ENCODE measurements at regions of chr11 and their contacts with region 1.

Region 1: GRCh38 chr11:10808553-10809372 is at the start of gene EIF4G2:
- DNase-seq: peak; percentile 99 to 100
- H3K4me3 ChIP-seq: peak within 1 kb of the TSS; percentile 63 to 99 (median 92)
- H3K27ac ChIP-seq: peak within 1 kb of the TSS; percentile 94 to 100 (median 98)
- H3K4me1 ChIP-seq: peaks cover 20 to 46% (median 36%) of the 10 kb centered on the region in 4 donors
- H3K27me3 ChIP-seq: no peaks in the 10 kb centered on the region
- CTCF ChIP-seq: peak in 1 of 7 experiments; percentile 17
- EP300 ChIP-seq: no peak
- POLR2A ChIP-seq: peak in 2 of 4 donors; percentile 98 to 99
- total RNA-seq, gene EIF4G2: 344 to 576 (median 400) TPM

Region 2: GRCh38 chr11:10857709-10858438 is 49.1 kb after region 1 on chr11 and contains the start of gene ZBED5:
- intact Hi-C with region 1: loop called (anchors 10 kb)
- DNase-seq: peak; percentile 99
- H3K4me3 ChIP-seq: peak within 1 kb of the TSS; percentile 81 to 90 (median 84)
- H3K27ac ChIP-seq: peak within 1 kb of the TSS; percentile 98 to 99 (median 99)
- H3K4me1 ChIP-seq: peaks cover 14 to 49% (median 34%) of the 10 kb centered on the region in 4 donors
- H3K27me3 ChIP-seq: no peaks in the 10 kb centered on the region
- CTCF ChIP-seq: peak in 2 of 7 experiments; percentile 9 to 11
- EP300 ChIP-seq: peak; percentile 11
- POLR2A ChIP-seq: peak in 2 of 4 donors; percentile 82 to 84
- total RNA-seq, gene ZBED5: 9.0 to 54.7 (median 25.9) TPM

Region 3: DNA sequence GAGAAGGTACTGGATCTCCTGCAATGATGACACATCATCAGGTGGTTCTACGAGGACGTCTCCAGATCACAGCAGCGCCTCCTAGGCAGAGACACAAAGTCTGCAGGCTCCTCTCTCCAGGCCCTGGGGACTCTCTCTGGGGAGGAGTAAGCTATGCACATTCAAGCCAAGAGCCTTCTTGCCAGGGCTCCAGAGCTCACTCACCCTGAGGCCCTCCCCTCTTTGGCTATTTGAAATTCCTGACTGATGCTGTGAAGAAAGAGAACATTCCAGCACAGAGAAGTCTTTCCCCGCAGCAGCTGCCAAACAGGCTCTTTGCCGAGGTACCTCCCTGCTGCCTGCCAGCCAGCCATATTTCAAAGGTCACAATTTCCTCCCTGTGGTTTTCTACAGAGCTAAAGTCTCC is 339.3 kb after region 1 on chr11:
- intact Hi-C with region 1: no loop called
- DNase-seq: peak in 1 of 2 donors; percentile 80
- H3K4me3 ChIP-seq: no peak overlapping the region
- H3K27ac ChIP-seq: peak overlapping the region in 3 of 5 donors; percentile 20 to 61 (median 40)
- H3K4me1 ChIP-seq: peaks cover 0 to 20% (median 10%) of the 10 kb centered on the region in 4 donors
- H3K27me3 ChIP-seq: no peaks in the 10 kb centered on the region
- CTCF ChIP-seq: peak in 2 of 7 experiments; percentile 5 to 14
- EP300 ChIP-seq: no peak
- POLR2A ChIP-seq: no peak